CD4-positive, alpha-beta memory T cell (primary cell): ENCODE measurements at regions of chr7 and their contacts with region 1.

Region 1: GRCh38 chr7:15751191-15751701 is 64.8 kb upstream of the MEOX2 start:
- DNase-seq: no peak
- H3K4me3 ChIP-seq: no peak overlapping the region
- H3K4me3 Mint-ChIP-seq: no peak overlapping the region
- H3K27ac ChIP-seq: no peak overlapping the region
- H3K27ac Mint-ChIP-seq: no peak overlapping the region
- H3K4me1 ChIP-seq: no peaks in the 10 kb centered on the region
- H3K4me1 Mint-ChIP-seq: no peaks in the 10 kb centered on the region
- H3K27me3 ChIP-seq: no peaks in the 10 kb centered on the region
- H3K27me3 Mint-ChIP-seq: no peaks in the 10 kb centered on the region

Region 2: DNA sequence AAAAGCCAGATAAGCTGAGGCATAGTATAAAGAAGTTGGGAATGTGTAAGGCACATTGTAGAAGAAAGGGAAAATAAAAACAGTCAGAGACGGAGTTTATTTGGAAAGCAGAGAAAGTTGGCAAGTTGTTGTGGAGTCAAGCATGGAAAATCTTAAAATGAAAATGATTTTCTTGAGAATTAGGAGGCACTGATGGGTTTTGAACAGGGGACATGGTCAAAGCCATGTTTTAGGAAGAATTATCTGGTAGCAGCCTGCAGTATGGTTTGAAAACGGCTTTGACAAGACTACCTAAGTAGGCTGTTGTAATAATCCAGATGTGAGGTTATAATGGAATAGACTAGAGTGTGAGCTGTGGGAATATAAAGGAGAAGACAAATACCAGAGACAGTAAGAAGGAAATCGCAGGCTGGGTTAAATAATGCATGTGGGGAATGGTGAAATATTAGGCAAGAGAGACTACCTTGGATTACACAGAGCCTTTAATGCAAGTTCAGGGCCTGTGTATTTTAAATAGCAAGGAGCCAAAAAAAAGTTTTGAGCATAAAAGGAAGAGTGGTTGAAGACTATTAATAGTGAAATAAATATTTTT is 65.7 kb after region 1 on chr7:
- CTCF ChIA-PET with region 1: no interaction called
- POLR2A ChIA-PET with region 1: no interaction called
- intact Hi-C with region 1: loop called (anchors 10 kb)
- DNase-seq: no peak
- H3K4me3 ChIP-seq: no peak overlapping the region
- H3K4me3 Mint-ChIP-seq: no peak overlapping the region
- H3K27ac ChIP-seq: no peak overlapping the region
- H3K27ac Mint-ChIP-seq: no peak overlapping the region
- H3K4me1 ChIP-seq: no peaks in the 10 kb centered on the region
- H3K4me1 Mint-ChIP-seq: no peaks in the 10 kb centered on the region
- H3K27me3 ChIP-seq: no peaks in the 10 kb centered on the region
- H3K27me3 Mint-ChIP-seq: no peaks in the 10 kb centered on the region